Heart right ventricle (tissue), 16 donors: ENCODE measurements at regions of chr7 and their contacts with region 1.

Region 1: DNA sequence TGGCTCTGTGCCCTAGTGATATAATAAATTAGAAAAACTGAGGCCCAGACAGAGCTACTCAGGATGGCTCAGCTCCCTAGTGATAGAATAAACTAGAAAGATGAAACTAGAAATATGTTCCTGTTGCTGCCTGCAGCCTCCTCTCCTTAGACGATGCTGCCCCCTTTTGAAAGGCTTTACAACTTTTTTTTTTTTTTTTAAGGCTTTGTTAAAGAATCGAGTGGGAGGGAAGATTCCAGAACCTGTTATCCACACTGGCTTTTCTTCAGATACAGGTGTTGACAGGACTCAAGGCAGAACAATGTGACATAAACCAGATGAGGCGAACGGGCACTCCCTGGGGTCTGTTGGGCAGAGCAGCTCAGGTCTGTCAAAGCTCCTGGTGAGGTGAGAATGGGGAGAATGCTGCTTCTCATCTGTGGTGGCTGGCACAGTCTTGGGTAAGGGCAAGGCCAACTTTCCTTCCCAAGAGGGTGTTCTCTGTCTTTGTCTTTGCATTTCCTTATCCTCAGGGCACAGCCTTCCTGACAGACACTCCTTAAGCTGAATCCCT is 175.1 kb downstream of the COBL start:
- DNase-seq: no peak
- ATAC-seq: peak; percentile 60 to 89 (median 75)
- H3K4me3 ChIP-seq: no peak overlapping the region
- H3K27ac ChIP-seq: peak overlapping the region in 7 of 10 donors; percentile 34 to 65 (median 51)
- H3K4me1 ChIP-seq: peaks cover 3 to 42% (median 33%) of the 10 kb centered on the region in 9 donors
- H3K27me3 ChIP-seq: no peaks in the 10 kb centered on the region
- CTCF ChIP-seq: peak; percentile 52 to 81 (median 67)

Region 2: DNA sequence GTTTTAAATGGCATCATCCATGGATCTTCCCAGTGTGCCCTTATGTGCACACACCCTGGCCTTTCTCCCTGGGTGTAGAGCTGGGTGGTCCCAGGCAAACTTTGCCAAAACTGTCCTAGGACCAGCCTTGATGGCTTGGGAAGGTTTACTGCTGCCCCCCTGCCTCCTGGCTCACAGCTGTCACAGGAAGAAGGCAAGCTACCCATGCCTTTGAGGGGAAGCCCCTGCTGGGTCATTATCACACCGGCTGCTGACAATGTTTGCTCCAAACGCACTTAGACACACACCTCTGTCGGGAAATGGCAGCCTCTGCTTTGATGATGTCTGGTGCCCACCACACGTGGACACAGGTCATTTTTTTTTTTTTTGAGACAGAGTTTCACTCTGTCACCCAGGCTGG is 666.2 kb before region 1 on chr7:
- intact Hi-C with region 1: loop called in 1 of 10 experiments (anchors 10 kb)
- DNase-seq: no peak
- ATAC-seq: no peak
- H3K4me3 ChIP-seq: no peak overlapping the region
- H3K27ac ChIP-seq: no peak overlapping the region
- H3K4me1 ChIP-seq: no peaks in the 10 kb centered on the region
- H3K27me3 ChIP-seq: no peaks in the 10 kb centered on the region
- CTCF ChIP-seq: no peak

Region 3: GRCh38 chr7:50610521-50611277 is 530.8 kb before region 1 on chr7:
- intact Hi-C with region 1: loop called in 2 of 10 experiments (anchors 10 kb)
- DNase-seq: no peak
- ATAC-seq: no peak
- H3K4me3 ChIP-seq: no peak overlapping the region
- H3K27ac ChIP-seq: no peak overlapping the region
- H3K4me1 ChIP-seq: peaks cover 0 to 19% (median 0%) of the 10 kb centered on the region in 9 donors
- H3K27me3 ChIP-seq: no peaks in the 10 kb centered on the region
- CTCF ChIP-seq: no peak

Region 4: DNA sequence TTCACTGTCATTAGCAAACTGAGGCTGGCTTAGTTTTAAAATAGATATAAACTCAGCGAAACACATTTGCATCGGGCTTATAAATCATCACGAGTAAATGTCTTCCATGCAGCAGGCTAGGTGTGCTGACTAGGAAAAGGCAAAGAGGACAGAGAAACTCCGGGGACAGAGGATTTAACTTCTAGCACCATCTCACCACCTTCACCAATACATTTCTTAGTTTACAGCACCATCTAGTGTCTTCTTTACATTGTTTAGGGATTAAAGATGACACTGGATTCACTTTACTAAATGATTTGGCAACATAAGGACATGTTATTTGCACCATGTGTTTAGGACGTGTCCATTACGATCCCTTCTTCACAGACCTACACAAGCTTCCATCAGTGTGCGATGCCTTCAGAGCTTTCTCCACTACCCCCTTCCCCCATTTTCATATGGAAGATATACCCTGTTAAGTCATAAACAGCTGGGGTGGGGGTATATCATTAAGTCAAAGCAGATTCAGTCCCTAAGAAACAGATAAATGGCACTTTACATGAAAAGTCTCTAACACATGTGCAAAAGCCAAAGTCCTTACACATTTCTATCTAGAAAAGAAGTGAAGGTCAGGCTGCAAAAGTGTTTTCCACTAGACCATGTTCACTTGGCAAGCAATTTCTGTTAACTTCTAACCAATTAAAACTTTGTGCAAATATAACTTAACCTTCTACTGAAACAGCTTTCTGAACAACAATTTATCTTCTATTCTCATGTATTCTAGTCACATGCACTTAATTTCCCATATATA is 462.1 kb before region 1 on chr7:
- intact Hi-C with region 1: loop called in 3 of 10 experiments (anchors 5 to 10 kb)
- DNase-seq: no peak
- ATAC-seq: peak; percentile 64 to 78 (median 70)
- H3K4me3 ChIP-seq: no peak overlapping the region
- H3K27ac ChIP-seq: peak overlapping the region in 2 of 10 donors; percentile 10 to 23
- H3K4me1 ChIP-seq: peaks cover 10 to 86% (median 43%) of the 10 kb centered on the region in 9 donors
- H3K27me3 ChIP-seq: no peaks in the 10 kb centered on the region
- CTCF ChIP-seq: peak in 8 of 9 donors; percentile 22 to 64 (median 51)

Region 5: DNA sequence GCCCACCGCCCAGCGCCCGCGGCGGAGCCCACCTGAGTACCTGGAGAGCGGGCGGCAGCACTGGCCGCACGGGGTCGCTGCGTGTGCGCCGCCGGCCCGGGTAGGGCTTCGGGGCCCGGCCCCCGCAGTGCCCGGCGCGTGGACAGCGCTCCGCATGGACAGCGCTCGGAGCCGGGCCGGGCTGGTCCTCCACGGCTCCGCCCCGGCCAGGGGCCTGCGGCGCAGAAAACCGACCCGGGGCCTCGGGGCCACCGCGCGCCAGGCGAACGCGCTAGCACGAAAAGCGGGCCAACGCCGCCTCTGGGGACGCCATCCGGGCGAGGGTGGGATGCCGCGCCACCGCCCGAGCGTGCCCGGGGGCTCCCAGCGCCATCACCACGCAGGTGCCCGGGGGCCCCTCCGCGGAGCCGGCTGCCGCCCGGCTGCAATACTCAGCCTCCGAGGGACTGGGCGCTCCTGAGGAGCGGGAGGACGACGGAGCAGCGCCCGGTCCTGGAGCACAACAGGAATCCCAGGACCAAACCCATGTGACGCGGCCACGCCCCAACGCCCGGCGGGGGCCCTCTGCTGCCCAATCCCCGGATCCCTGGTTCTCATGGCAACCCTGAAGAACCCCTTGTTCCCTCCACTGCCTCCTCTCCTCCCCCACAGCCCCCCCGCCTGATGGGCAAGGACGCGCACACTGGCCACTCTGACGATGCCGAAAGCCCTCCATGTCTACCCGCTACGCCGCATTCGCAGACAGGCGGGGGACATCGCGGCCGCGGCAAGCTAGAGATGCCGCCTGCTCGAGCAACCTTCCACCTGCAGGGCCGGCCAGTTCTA is 358.9 kb before region 1 on chr7 and contains the start of gene GRB10:
- intact Hi-C with region 1: loop called in 3 of 10 experiments (anchors 5 to 10 kb)
- DNase-seq: peak; percentile 37 to 48
- ATAC-seq: peak; percentile 41 to 88 (median 76)
- H3K4me3 ChIP-seq: peak within 1 kb of the TSS; percentile 7 to 65 (median 59)
- H3K27ac ChIP-seq: peak within 1 kb of the TSS in 5 of 10 donors; percentile 12 to 34 (median 26)
- H3K4me1 ChIP-seq: peaks cover 4 to 73% (median 45%) of the 10 kb centered on the region in 9 donors
- H3K27me3 ChIP-seq: peaks cover 0 to 6% (median 0%) of the 10 kb centered on the region in 7 donors
- CTCF ChIP-seq: peak in 7 of 9 donors; percentile 15 to 50 (median 28)
- total RNA-seq, gene GRB10: 25.5 to 48.7 (median 31.5) TPM

Region 6: DNA sequence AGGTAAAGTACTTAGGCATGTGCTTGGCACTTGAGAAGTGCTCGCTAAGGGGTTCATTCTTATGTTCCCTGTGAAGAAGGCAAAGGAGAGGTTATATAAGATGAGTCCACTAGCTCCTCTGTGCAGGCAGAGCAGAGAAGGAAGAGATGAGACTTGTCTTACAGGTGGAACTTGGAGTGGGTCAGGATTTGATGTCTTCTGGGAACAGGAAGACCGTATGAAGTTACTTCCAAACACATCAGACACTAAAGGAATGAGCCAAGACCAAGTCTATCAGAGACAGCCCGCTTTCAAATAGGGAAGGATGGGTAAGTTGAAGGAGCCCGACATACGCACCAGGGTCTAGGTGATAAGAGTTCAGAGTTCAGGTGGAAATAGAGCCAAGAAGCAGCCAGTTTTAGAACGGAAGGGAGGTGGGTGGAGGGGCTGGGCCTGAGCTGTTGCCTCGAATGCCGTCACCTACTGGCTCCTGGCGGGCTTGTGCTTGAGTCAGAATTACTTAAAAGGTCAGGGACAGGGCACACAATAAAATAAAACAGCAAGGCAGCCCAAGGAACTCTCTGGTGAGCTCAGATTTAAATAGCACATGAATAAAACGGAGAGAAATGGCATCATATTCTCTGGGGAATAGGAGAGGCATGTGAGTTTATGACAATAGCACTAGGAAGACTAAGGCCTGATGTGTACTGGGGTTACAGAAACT is 302.7 kb before region 1 on chr7:
- intact Hi-C with region 1: no loop called
- DNase-seq: peak; percentile 39 to 62
- ATAC-seq: peak; percentile 83 to 97 (median 92)
- H3K4me3 ChIP-seq: no peak overlapping the region
- H3K27ac ChIP-seq: peak overlapping the region in 7 of 10 donors; percentile 6 to 64 (median 27)
- H3K4me1 ChIP-seq: peaks cover 0 to 19% (median 12%) of the 10 kb centered on the region in 9 donors
- H3K27me3 ChIP-seq: no peaks in the 10 kb centered on the region
- CTCF ChIP-seq: no peak

Region 7: DNA sequence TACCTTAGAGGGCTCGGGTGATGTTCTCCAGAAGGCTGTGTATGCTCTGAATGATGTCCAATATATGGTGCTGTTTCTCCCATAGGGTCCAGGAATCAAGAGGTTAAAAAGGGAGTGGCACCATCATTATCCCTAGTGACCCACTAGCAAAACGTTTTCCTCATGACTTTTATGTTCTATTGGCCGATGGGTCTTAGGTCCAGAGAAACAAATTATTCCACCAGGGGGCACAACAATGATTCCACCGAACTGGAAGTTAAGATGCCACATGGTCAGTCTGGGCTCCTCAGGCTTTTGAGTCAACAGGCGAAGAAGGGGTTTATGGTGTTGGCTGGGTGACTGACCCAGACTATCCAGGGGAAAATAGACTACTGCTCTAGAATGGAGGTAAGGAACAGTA is 81.0 kb before region 1 on chr7:
- intact Hi-C with region 1: loop called in 3 of 10 experiments (anchors 5 kb)
- DNase-seq: no peak
- ATAC-seq: no peak
- H3K4me3 ChIP-seq: no peak overlapping the region
- H3K27ac ChIP-seq: no peak overlapping the region
- H3K4me1 ChIP-seq: peaks cover 0 to 3% (median 0%) of the 10 kb centered on the region in 9 donors
- H3K27me3 ChIP-seq: no peaks in the 10 kb centered on the region
- CTCF ChIP-seq: peak in 2 of 9 donors; percentile 12 to 27